Activated T-helper 1 cell treated with anti-CD3 and anti-CD28 coated beads, Interleukin-12 subunit alpha, Interleukin-12 subunit beta, Interleukin-2, Interleukin-4 antibody, amounts not matched to agents 30 ng/mL and 10 ng/mL and 1 ng/mL, durations not matched to agents 14 hours and 24 hours and 36 hours (primary cell): ENCODE measurements at regions of chr16 and their contacts with region 1.

Region 1: GRCh38 chr16:1983544-1984346 is at the start of gene GFER:
- DNase-seq: peak; percentile 80
- H3K4me3 Mint-ChIP-seq: peak within 1 kb of the TSS; percentile 84
- H3K27ac Mint-ChIP-seq: peak within 1 kb of the TSS; percentile 29
- H3K4me1 Mint-ChIP-seq: peaks cover 4% of the 10 kb centered on the region
- H3K27me3 Mint-ChIP-seq: peaks cover 32% of the 10 kb centered on the region
- total RNA-seq, gene GFER: 46.2 and 54.0 TPM in 2 replicates

Region 2: GRCh38 chr16:1800701-1801100 is 183.0 kb before region 1 on chr16:
- intact Hi-C with region 1: no loop called
- DNase-seq: no peak
- H3K4me3 Mint-ChIP-seq: no peak overlapping the region
- H3K27ac Mint-ChIP-seq: no peak overlapping the region
- H3K4me1 Mint-ChIP-seq: no peaks in the 10 kb centered on the region
- H3K27me3 Mint-ChIP-seq: no peaks in the 10 kb centered on the region

Region 3: GRCh38 chr16:1959269-1960049 is 24.3 kb before region 1 on chr16 and contains the start of gene NDUFB10:
- intact Hi-C with region 1: loop called (anchors 1 kb)
- DNase-seq: peak; percentile 93
- H3K4me3 Mint-ChIP-seq: peak within 1 kb of the TSS; percentile 97
- H3K27ac Mint-ChIP-seq: peak within 1 kb of the TSS; percentile 90
- H3K4me1 Mint-ChIP-seq: peaks cover 34% of the 10 kb centered on the region
- H3K27me3 Mint-ChIP-seq: no peaks in the 10 kb centered on the region
- total RNA-seq, gene NDUFB10: 134 and 138 TPM in 2 replicates

Region 4: DNA sequence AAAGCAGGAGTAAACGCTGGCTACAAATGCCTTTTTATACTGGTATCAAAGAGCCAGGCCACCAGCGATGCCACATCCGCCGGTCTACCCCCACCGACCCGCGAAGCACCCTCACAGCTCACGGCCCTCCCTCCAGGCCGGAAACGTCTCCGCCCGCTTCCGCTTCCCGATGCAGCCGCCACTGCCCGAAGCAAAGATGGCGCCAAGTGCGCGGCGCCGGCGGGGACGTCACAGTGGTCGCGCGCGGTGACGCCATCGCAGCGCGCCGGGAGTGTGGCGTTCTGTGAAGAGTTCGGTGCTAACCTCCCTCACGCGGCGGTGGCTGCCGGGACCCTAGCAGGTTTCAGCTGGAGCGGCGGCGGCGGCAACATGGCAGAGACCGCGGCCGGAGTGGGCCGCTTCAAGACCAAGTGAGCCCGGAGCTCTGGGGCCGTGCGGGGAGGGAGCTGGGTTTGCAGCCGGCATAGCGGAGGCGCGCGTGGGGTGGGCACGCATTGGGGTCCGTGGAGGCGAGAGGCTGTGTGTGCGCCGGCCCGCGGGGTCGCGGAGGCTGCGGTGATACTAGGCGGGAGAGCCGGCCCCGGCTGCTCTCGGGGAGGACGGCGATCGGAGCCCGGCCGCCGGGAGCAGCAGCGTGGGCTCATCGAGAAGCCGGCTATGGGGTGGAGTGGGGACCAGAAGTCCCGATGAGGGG is 11.8 kb before region 1 on chr16 and contains the start of gene TBL3:
- intact Hi-C with region 1: loop called (anchors 1 kb)
- DNase-seq: peak; percentile 97
- H3K4me3 Mint-ChIP-seq: peak within 1 kb of the TSS; percentile 97
- H3K27ac Mint-ChIP-seq: peak within 1 kb of the TSS; percentile 99
- H3K4me1 Mint-ChIP-seq: peaks cover 19% of the 10 kb centered on the region
- H3K27me3 Mint-ChIP-seq: no peaks in the 10 kb centered on the region
- total RNA-seq, gene TBL3: 84.9 and 87.3 TPM in 2 replicates